Activated CD4-positive, alpha-beta T cell treated with anti-CD3 and anti-CD28 coated beads for 36 hours (primary cell): ENCODE measurements at regions of chr11 and their contacts with region 1.

Region 1: DNA sequence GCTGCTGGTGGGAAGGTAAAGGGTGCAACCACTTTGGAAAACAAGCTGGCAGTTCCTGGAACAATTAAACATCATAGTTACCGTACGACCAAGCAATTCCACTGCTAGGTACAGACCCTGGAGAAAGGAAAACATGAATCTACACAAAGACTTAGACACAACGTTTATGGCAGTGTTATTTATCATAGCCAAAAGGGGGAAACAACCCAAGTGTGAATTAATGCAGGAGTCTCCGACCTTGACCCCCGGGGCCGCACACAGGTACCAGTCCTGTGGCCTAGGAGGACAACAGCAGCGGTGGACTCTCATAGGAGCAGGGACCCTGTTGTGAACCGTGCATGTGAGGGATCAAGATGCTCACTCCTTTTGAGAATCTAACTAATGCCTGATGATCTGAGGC is 22.5 kb downstream of the PRDM10 start:
- DNase-seq: no peak
- ATAC-seq: no peak
- H3K4me3 Mint-ChIP-seq: no peak overlapping the region
- H3K27ac Mint-ChIP-seq: no peak overlapping the region
- H3K4me1 Mint-ChIP-seq: no peaks in the 10 kb centered on the region
- H3K27me3 Mint-ChIP-seq: no peaks in the 10 kb centered on the region

Region 2: DNA sequence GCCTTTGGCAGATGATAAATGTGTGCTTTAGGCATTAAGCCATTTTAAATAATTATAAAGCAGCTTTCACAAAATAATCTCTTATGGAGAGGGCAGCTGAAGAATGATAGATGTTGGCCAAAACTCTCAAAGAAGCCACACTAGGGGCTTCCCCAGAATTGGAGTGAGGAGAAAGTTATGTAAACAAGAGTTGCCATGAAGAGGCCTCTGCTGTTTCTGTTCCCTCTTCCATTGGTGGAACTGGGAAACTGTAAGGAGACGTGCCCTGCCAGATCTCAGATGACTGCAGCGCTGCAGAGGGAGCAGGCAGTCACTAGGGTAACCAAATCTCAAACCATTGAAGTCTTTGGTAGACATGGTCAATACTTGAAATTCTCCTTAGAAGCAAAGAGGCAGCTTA is 70.2 kb after region 1 on chr11:
- CTCF ChIA-PET with region 1: no interaction called
- POLR2A ChIA-PET with region 1: no interaction called
- intact Hi-C with region 1: loop called in 1 of 2 experiments (anchors 5 kb)
- DNase-seq: no peak
- ATAC-seq: no peak
- H3K4me3 Mint-ChIP-seq: no peak overlapping the region
- H3K27ac Mint-ChIP-seq: no peak overlapping the region
- H3K4me1 Mint-ChIP-seq: no peaks in the 10 kb centered on the region
- H3K27me3 Mint-ChIP-seq: no peaks in the 10 kb centered on the region